ENCODE measurements at regions of chr17 and their contacts with region 1.

Region 1: GRCh38 chr17:33038740-33039139 is 47.1 kb downstream of the SPACA3 start:
- DNase-seq: peak; percentile 41
- H3K4me3 Mint-ChIP-seq: no peak overlapping the region
- H3K27ac Mint-ChIP-seq: no peak overlapping the region
- H3K4me1 Mint-ChIP-seq: no peaks in the 10 kb centered on the region
- H3K27me3 Mint-ChIP-seq: peaks cover 49% of the 10 kb centered on the region

Region 2: DNA sequence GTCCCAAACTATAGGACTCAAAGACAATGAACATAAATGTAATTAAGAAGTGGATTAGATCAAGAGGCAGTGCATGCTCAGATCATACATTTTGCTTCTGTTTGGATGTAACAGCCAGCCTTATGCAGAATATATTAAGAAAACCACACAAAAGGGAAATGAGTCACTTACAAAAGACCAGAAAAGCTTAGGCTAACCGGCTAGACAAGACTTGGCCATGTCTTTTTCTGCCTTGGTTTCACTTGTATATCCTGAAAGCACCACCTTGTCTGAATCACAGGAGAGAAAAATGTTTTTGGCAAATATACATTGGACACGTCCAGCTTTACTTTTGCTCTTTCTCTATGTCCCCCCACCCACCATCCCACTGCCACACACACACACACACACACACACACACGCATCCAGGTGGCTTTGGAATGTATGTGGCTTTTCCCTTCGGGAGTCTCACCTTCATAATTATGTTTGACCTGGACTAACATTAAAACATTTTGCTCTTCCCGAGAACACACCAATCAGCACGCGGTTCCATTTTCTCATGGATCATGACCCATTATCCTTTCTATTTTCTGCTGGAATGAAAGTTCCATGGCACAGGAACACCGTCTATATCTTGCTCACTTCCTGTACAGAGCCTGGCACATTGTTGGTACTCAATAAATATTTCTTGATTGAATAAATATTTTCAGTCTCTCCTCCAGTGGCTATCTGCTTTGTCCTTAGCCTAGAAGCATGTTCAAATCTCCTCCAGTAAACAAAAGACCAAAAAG is 487.4 kb before region 1 on chr17:
- CTCF ChIA-PET with region 1: no interaction called
- intact Hi-C with region 1: no loop called
- DNase-seq: peak; percentile 22
- H3K4me3 Mint-ChIP-seq: no peak overlapping the region
- H3K27ac Mint-ChIP-seq: peak overlapping the region; percentile 46
- H3K4me1 Mint-ChIP-seq: peaks cover 48% of the 10 kb centered on the region
- H3K27me3 Mint-ChIP-seq: no peaks in the 10 kb centered on the region

Region 3: DNA sequence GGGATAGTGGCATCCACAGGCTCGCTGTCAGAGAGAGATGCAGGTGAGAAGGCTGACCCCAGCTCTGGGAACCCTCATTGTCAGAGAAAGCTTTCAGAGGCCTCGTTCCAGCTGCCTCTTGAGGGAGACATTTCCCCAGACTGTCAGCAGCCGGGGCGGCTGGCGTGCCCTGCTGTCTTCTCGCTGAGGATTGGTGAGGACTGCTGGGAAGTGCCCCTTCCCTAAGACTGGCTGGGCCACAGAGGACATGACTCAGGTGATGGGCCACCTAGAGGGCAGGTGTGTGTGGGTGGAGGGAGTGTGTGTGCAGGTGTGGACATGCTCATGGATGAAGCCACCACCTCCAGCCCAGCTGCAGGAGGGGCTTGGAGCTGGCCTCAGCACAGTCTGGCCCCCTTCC is 21.8 kb before region 1 on chr17:
- CTCF ChIA-PET with region 1: no interaction called
- intact Hi-C with region 1: no loop called
- DNase-seq: no peak
- H3K4me3 Mint-ChIP-seq: no peak overlapping the region
- H3K27ac Mint-ChIP-seq: no peak overlapping the region
- H3K4me1 Mint-ChIP-seq: no peaks in the 10 kb centered on the region
- H3K27me3 Mint-ChIP-seq: no peaks in the 10 kb centered on the region

Region 4: GRCh38 chr17:33611532-33611931 is 572.8 kb after region 1 on chr17:
- CTCF ChIA-PET with region 1: no interaction called
- intact Hi-C with region 1: loop called (anchors 5 kb)
- DNase-seq: no peak
- H3K4me3 Mint-ChIP-seq: no peak overlapping the region
- H3K27ac Mint-ChIP-seq: no peak overlapping the region
- H3K4me1 Mint-ChIP-seq: no peaks in the 10 kb centered on the region
- H3K27me3 Mint-ChIP-seq: peaks cover 5% of the 10 kb centered on the region

Region 5: GRCh38 chr17:33674685-33675084 is 635.9 kb after region 1 on chr17:
- CTCF ChIA-PET with region 1: no interaction called
- intact Hi-C with region 1: loop called (anchors 10 kb)
- DNase-seq: peak; percentile 68
- H3K4me3 Mint-ChIP-seq: no peak overlapping the region
- H3K27ac Mint-ChIP-seq: no peak overlapping the region
- H3K4me1 Mint-ChIP-seq: no peaks in the 10 kb centered on the region
- H3K27me3 Mint-ChIP-seq: peaks cover 6% of the 10 kb centered on the region

Measured in activated naive CD4-positive, alpha-beta T cell treated with anti-CD3 and anti-CD28 coated beads for 36 hours (primary cell).